Colonic mucosa (tissue), 4 donors: ENCODE measurements at regions of chr17 and their contacts with region 1.

Region 1: DNA sequence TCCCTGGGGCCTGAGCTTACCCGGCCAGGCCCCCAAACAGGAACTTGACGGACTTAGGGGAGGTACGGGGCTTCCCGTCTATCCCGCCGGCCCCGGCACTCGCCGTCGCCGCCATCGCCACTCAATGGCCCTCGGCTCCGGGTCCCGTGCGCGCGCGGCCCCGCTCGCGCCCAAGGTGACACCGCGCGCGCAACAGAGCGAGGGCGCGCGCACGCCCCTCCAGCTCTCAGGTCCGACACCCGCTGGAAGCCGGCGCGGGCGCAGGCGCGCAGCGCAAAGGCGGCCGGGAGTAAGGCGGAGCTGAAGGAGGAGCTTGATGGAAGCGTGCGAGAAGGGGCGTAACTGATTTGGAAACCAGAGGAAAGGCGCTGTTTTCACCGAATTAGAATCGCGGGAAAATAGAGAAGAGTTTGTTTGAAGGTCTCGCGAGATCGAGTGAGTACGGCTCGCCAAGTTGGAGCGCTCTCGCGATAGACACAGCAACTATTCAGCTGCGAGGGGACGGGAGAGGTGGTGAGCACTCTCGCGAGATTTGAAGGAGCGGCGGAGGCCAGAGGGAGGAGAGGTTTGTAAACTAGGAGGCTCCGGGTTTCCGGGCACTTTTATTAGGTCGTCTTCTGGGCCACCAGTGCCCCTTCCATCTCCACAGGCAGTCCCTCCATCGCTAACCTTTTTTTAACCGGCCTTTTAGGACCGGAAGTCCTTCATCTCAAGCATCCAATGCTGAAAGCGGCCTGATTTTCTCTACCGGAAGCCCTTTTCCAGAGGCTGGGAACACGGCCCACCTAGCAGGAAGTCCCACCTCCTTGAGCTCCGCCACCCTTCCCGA is at the starts of genes RNF167 and SLC25A11:
- DNase-seq: peak; percentile 96
- H3K4me3 ChIP-seq: peak within 1 kb of the TSS; percentile 70
- H3K27ac ChIP-seq: peak within 1 kb of the TSS; percentile 98
- H3K4me1 ChIP-seq: peaks cover 11% of the 10 kb centered on the region
- H3K27me3 ChIP-seq: no peaks in the 10 kb centered on the region
- CTCF ChIP-seq: no peak
- total RNA-seq, gene RNF167: 92.1 to 120 TPM
- total RNA-seq, gene SLC25A11: 73.1 to 116 TPM

Region 2: GRCh38 chr17:4997302-4998026 is 57.5 kb after region 1 on chr17 and contains the starts of genes INCA1 and KIF1C:
- intact Hi-C with region 1: loop called (anchors 5 kb)
- DNase-seq: peak; percentile 95
- H3K4me3 ChIP-seq: peak within 1 kb of the TSS; percentile 99
- H3K27ac ChIP-seq: peak within 1 kb of the TSS; percentile 83
- H3K4me1 ChIP-seq: peaks cover 14% of the 10 kb centered on the region
- H3K27me3 ChIP-seq: no peaks in the 10 kb centered on the region
- CTCF ChIP-seq: no peak
- total RNA-seq, gene INCA1: 1.6 to 4.2 TPM
- total RNA-seq, gene KIF1C: 195 to 291 TPM